ENCODE measurements at regions of chr5 and their contacts with region 1.

Region 1: GRCh38 chr5:152142840-152143469 is 218.3 kb upstream of the GLRA1 start:
- DNase-seq: peak in 8 of 10 donors; percentile 32 to 66 (median 54)
- H3K4me3 ChIP-seq: no peak overlapping the region
- H3K27ac ChIP-seq: no peak overlapping the region
- H3K27me3 ChIP-seq: peaks cover 0 to 4% (median 0%) of the 10 kb centered on the region in 45 donors
- CTCF ChIP-seq: peak; percentile 52 to 90 (median 81)

Region 2: GRCh38 chr5:151659001-151659754 is 483.8 kb before region 1 on chr5:
- intact Hi-C with region 1: no loop called
- DNase-seq: peak; percentile 74 to 90 (median 82)
- H3K4me3 ChIP-seq: peak overlapping the region in 5 of 59 donors; percentile 9 to 38 (median 16)
- H3K27ac ChIP-seq: peak overlapping the region in 1 of 59 donors; percentile 28
- H3K27me3 ChIP-seq: no peaks in the 10 kb centered on the region
- CTCF ChIP-seq: peak; percentile 77 to 100 (median 94)

Region 3: DNA sequence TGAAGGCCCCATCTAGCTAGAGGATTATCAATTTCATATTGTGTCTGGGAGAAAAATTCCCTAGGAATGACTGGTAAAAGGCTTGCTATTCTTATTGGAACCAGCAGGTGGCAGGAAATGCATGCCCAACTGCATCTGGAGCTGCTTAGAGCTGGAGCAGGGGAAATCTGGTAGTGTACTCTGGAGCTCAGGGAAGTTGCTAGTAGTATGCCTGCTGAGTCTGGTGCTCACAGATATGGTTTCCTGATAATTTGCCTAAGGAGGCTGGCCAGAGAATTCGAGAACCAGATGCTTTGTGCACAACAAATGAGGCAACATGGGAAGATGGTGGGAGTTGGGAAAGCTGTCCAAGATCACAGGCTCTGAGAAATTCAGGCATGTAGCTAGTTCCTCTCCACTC is 317.5 kb before region 1 on chr5:
- intact Hi-C with region 1: loop called (anchors 2 to 5 kb)
- DNase-seq: peak in 8 of 10 donors; percentile 37 to 67 (median 60)
- H3K4me3 ChIP-seq: no peak overlapping the region
- H3K27ac ChIP-seq: peak overlapping the region in 1 of 59 donors; percentile 11
- H3K27me3 ChIP-seq: no peaks in the 10 kb centered on the region
- CTCF ChIP-seq: peak; percentile 77 to 97 (median 89)

Region 4: DNA sequence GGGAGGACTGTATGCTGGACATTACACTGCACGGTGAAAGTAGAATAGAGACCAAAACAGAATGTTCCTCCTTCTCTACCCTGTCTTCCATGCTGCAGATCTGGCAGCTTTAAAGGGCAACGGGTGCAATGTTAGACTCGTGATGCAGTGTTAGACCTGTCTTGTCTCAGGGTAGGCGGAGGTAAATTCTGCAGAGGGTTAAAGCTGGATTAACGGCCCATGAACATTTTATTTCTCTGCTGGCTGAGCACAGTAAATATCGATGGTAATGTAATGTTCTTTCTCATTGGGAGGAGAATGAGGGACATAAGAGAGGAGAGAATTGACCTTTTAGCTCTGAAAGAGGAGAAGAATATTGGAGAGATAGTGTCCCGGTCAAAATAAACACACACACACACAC is 83.2 kb after region 1 on chr5:
- intact Hi-C with region 1: no loop called
- DNase-seq: no peak
- H3K4me3 ChIP-seq: no peak overlapping the region
- H3K27ac ChIP-seq: no peak overlapping the region
- H3K27me3 ChIP-seq: peaks cover 0 to 2% (median 0%) of the 10 kb centered on the region in 45 donors
- CTCF ChIP-seq: no peak

Region 5: GRCh38 chr5:152349683-152350526 is 206.9 kb after region 1 on chr5:
- intact Hi-C with region 1: loop called in 1 of 2 experiments (anchors 10 kb)
- DNase-seq: peak; percentile 37 to 68 (median 56)
- H3K4me3 ChIP-seq: no peak overlapping the region
- H3K27ac ChIP-seq: no peak overlapping the region
- H3K27me3 ChIP-seq: no peaks in the 10 kb centered on the region
- CTCF ChIP-seq: peak; percentile 60 to 91 (median 81)

Region 6: GRCh38 chr5:152514827-152515397 is 372.0 kb after region 1 on chr5:
- intact Hi-C with region 1: loop called in 1 of 2 experiments (anchors 5 kb)
- DNase-seq: no peak
- H3K4me3 ChIP-seq: no peak overlapping the region
- H3K27ac ChIP-seq: no peak overlapping the region
- H3K27me3 ChIP-seq: peaks cover 0 to 3% (median 0%) of the 10 kb centered on the region in 45 donors
- CTCF ChIP-seq: peak; percentile 36 to 75 (median 62)